Sigmoid colon (tissue), 7 donors: ENCODE measurements at regions of chr1 and their contacts with region 1.

Region 1: GRCh38 chr1:20493839-20494608 is 8.0 kb upstream of the CAMK2N1 start:
- DNase-seq: peak; percentile 92
- H3K4me3 ChIP-seq: no peak overlapping the region
- H3K27ac ChIP-seq: no peak overlapping the region
- H3K4me1 ChIP-seq: peaks cover 0 to 8% (median 7%) of the 10 kb centered on the region in 4 donors
- H3K27me3 ChIP-seq: no peaks in the 10 kb centered on the region
- CTCF ChIP-seq: peak; percentile 94 to 99 (median 98)
- EP300 ChIP-seq: no peak
- POLR2A ChIP-seq: no peak

Region 2: DNA sequence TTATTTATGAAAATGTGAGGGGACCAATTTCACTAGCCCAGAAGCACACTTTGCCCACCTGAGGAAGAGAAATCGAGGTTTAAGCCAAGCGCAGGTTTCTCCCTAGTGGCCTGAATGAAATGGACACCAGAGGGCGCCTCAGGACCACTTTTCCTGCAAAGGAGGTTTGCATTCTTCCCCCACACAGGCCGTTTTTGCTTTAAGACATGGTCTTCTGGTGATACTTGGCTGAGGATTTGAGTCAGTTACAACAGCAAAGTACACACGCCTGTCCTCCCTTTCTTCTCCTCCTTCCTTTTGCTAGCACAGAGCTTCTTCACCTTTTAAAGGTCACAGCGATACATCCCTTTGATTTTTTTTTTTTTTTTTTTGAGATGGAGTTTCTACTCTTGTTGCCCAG is 576.0 kb before region 1 on chr1:
- intact Hi-C with region 1: loop called (anchors 5 kb)
- DNase-seq: peak; percentile 89
- H3K4me3 ChIP-seq: no peak overlapping the region
- H3K27ac ChIP-seq: no peak overlapping the region
- H3K4me1 ChIP-seq: no peaks in the 10 kb centered on the region
- H3K27me3 ChIP-seq: no peaks in the 10 kb centered on the region
- CTCF ChIP-seq: peak; percentile 72 to 88 (median 85)
- EP300 ChIP-seq: no peak
- POLR2A ChIP-seq: no peak

Region 3: DNA sequence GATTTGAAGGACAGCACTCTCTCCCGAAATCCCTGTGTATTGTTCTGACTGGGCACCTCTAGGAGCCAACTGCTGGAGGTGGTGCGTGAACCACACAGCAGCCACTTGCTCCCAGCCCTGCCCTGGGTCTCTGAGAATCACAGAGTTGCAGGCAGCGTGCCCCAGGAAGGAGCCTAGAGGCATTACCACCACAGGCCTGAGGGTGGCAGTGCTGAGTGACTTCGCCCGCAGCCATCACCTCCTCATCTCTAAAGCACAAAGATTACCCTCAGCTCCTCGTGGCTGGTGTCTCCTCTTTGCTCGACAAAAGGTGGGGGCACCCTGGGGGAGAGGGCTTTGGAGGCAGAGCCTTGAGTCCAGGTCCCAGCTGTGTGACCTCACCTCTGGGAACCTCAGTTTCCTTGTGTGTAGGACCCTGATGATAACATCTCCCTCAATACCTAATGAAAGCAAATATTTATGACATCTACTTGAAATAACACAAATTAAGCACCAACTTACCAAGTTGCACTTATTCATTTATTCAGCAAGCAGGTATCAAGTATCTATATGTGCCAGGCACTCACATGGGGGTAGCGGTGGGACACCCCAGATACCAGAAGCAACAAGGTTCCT is 117.0 kb before region 1 on chr1:
- intact Hi-C with region 1: loop called (anchors 1 kb)
- DNase-seq: peak; percentile 73
- H3K4me3 ChIP-seq: no peak overlapping the region
- H3K27ac ChIP-seq: no peak overlapping the region
- H3K4me1 ChIP-seq: no peaks in the 10 kb centered on the region
- H3K27me3 ChIP-seq: peaks cover 0 to 26% (median 10%) of the 10 kb centered on the region in 3 donors
- CTCF ChIP-seq: peak; percentile 6 to 82 (median 75)
- EP300 ChIP-seq: no peak
- POLR2A ChIP-seq: no peak

Region 4: DNA sequence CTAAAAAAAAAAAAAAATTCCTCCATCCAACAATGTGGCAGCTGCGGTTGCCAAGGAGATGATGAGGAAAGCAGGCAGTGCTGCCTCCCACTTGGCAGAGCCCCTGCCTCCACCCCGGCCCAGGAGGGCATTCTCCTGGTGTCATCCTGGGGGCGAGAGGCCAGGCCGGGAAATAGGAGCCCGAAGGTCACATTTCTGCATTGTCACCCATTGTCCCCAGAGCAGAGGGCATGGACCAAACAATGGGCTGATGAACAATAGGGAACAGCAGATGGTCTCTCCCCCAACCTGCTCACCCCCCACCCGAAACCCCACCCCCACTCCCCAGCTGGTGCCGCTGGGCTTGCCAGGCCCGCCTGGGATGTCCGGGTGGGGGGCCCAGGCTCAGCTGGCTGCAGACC is 45.4 kb before region 1 on chr1:
- intact Hi-C with region 1: no loop called
- DNase-seq: no peak
- H3K4me3 ChIP-seq: no peak overlapping the region
- H3K27ac ChIP-seq: no peak overlapping the region
- H3K4me1 ChIP-seq: no peaks in the 10 kb centered on the region
- H3K27me3 ChIP-seq: peaks cover 0 to 6% (median 4%) of the 10 kb centered on the region in 3 donors
- CTCF ChIP-seq: no peak
- EP300 ChIP-seq: no peak
- POLR2A ChIP-seq: no peak

Region 5: GRCh38 chr1:20507564-20508410 is 13.8 kb after region 1 on chr1 and contains the start of gene MUL1:
- intact Hi-C with region 1: loop called (anchors 2 kb)
- DNase-seq: peak; percentile 97
- H3K4me3 ChIP-seq: peak within 1 kb of the TSS; percentile 68 to 96 (median 83)
- H3K27ac ChIP-seq: peak within 1 kb of the TSS; percentile 83 to 93 (median 88)
- H3K4me1 ChIP-seq: peaks cover 0 to 48% (median 37%) of the 10 kb centered on the region in 4 donors
- H3K27me3 ChIP-seq: no peaks in the 10 kb centered on the region
- CTCF ChIP-seq: no peak
- EP300 ChIP-seq: no peak
- POLR2A ChIP-seq: peak; percentile 72 to 76
- total RNA-seq, gene MUL1: 26.8 to 34.1 (median 32.6) TPM